GM10248 (cell line): ENCODE measurements at regions of chr3 and their contacts with region 1.

Region 1: DNA sequence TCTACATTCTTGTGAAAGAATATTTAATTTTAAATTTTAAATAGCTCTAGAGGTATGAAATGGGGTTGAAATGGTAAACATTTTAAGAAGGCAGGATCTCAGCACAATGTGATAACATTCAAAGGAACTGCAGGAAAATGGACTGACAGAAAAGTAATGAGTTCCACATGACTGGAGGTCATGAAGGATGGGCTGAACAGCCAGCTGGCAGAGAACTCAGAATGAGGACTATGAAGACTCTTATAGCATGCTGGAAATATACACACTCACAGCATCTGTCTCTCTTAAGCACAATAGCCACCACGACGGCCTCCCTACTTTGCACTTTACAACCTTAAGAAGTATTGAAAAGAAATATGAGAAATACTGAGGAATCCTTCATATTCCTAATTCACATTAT is 94.7 kb downstream of the TNIK start:
- DNase-seq: no peak
- CTCF ChIP-seq: no peak

Region 2: DNA sequence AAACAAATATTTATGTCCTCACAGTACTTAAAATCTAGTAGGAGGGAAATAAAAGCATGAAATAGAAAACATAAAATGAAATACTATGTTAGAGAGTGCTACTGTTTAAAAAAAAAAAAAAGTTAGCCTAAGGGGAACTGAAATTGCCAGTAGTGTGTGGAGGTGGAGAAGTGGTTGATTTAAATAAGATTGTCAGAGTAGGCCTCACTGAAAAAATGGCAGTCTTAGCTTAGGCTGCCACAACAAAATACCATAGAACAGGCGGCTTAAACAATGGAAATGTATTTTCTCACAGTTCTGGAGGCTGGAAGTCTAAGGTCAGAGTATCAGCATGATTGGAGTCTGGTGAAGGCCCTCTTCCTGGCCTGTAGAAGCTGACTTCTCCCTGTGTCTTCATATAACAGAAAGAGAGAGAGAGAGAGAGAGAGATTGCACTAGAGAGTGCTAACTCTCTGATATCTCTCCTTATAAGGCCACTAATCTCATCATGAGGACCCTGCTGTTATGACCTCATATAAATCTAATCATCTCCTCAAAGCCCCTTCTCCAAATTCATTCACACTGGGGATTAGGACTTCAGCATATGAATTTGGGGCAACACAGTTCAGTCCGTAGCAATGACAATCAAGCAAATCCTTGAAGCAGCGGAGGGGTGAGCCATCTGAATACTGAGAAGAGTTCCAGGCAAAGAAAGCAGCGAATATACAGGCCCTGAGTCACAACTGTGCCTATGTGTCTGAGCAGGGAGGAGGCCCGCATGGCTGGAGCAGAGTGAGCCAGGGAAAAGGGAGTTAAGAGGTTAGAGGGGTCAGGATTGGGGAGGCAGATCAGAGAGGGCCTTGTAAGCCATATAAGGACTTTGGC is 1529.2 kb before region 1 on chr3:
- CTCF ChIA-PET with region 1: no interaction called
- POLR2A ChIA-PET with region 1: no interaction called
- DNase-seq: peak; percentile 66
- CTCF ChIP-seq: no peak

Region 3: DNA sequence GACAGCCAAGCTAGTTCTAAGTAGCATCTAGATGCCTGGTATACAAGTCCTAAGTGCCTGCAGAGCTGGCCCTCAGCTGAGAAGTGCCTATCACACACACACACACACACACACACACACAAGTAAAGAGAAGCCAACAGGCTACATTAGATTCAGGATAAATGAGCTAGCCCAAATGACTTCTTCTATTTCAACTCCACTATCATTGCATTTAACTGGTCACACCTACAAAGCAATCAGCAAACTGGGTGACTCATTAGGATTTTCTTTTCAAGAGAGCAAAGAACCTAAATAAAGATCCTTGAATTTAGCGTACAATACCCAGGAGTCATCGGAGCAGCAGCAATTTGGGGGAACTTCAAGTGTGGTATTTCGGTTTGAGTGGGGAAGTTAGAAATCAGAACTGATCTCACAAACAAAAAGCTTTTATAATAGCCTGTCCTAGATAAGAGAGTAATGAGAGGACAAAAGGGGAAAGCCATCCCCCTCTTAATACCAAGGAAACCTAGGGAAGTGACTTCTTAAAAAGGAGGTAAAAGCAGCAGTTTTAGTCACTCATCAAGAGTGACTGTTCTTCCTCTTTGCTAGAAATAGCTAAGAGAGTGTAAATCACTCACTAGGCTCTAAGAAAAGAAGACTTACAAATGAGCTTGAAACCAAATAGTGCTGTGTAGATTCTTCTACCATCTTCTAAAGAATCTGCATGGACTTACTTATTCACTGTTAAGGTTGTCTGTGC is 18.0 kb before region 1 on chr3:
- CTCF ChIA-PET with region 1: interaction called, 13 read pairs
- POLR2A ChIA-PET with region 1: no interaction called
- DNase-seq: peak; percentile 20
- CTCF ChIP-seq: no peak